SK-N-SH (cell line): ENCODE measurements at regions of chr10 and their contacts with region 1.

Region 1: DNA sequence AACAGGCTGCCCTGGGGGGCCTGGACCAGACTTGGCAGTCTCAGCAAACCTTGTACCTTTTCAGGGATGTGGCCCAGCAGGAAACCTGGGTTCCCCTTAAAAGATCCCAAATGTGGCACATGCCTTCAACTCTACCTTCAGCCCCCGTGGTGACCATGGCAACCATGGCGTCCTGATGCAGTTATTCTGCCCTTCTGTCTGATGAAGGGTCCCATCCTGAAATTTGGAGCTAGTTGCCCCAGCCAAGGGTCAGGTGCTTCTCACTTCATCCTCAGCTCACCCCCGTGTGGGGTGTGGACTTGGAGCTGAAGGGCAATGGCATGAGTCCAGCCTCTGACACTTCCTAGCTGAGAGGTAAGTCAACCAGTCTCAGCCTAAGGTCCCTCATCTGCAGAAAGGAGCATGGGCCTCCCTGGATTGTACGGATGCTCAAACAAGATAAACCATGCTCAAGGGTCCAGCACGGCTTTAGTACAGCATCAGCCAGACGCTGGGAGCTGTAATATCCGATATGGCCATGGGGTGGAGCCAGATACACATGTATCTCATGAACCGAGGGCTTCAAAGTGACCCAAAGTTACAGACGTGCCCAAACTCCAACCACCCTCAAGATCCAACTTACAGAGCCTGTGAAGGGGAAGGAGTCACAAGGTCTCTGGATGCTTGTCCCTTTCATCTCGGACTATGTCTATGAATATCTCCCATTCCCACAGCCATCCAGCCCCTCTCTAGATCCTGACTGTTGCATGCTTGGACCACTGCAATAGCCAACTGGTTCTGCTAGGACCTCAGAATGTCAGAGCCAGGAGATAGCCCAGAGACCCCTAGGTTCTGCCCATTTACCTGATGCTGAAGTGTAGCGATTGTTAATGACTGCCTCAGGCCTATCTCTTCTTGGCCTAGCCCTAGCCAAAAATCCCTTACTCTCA is 142.5 kb downstream of the SH3PXD2A start:
- DNase-seq: peak; percentile 73
- H3K4me3 ChIP-seq: no peak overlapping the region
- H3K27ac ChIP-seq: no peak overlapping the region
- H3K4me1 ChIP-seq: peaks cover 30 to 59% of the 10 kb centered on the region in 2 experiments; a peak in 2 of 4 replicates
- H3K27me3 ChIP-seq: no peaks in the 10 kb centered on the region
- CTCF ChIP-seq: peak; percentile 88
- EP300 ChIP-seq: no peak
- RAD21 ChIP-seq: peak; percentile 98

Region 2: GRCh38 chr10:103592186-103593021 is 120.4 kb before region 1 on chr10:
- CTCF ChIA-PET with region 1: interaction called, 30 read pairs
- POLR2A ChIA-PET with region 1: no interaction called
- DNase-seq: peak; percentile 91
- H3K4me3 ChIP-seq: no peak overlapping the region; a peak in 1 of 4 replicates
- H3K27ac ChIP-seq: peak overlapping the region in 1 of 2 experiments; percentile 7; a peak in 1 of 4 replicates
- H3K4me1 ChIP-seq: peaks cover 0 to 15% of the 10 kb centered on the region in 2 experiments; a peak in 1 of 4 replicates
- H3K27me3 ChIP-seq: no peaks in the 10 kb centered on the region
- CTCF ChIP-seq: peak; percentile 71
- EP300 ChIP-seq: no peak
- RAD21 ChIP-seq: peak; percentile 79

Region 3: GRCh38 chr10:103605359-103606095 is 107.3 kb before region 1 on chr10:
- CTCF ChIA-PET with region 1: interaction called, 16 read pairs
- POLR2A ChIA-PET with region 1: no interaction called
- DNase-seq: peak; percentile 79
- H3K4me3 ChIP-seq: no peak overlapping the region
- H3K27ac ChIP-seq: peak overlapping the region in 1 of 2 experiments; percentile 1; a peak in 1 of 4 replicates
- H3K4me1 ChIP-seq: peaks cover 0 to 25% of the 10 kb centered on the region in 2 experiments; a peak in 2 of 4 replicates
- H3K27me3 ChIP-seq: no peaks in the 10 kb centered on the region
- CTCF ChIP-seq: peak; percentile 72
- EP300 ChIP-seq: no peak
- RAD21 ChIP-seq: peak; percentile 77

Region 4: GRCh38 chr10:103727546-103727963 is 14.7 kb after region 1 on chr10:
- CTCF ChIA-PET with region 1: interaction called, 28 read pairs
- POLR2A ChIA-PET with region 1: interaction called, 3 read pairs
- DNase-seq: peak; percentile 67
- H3K4me3 ChIP-seq: no peak overlapping the region
- H3K27ac ChIP-seq: peak overlapping the region in 1 of 2 experiments; percentile 94; a peak in 2 of 4 replicates
- H3K4me1 ChIP-seq: peaks cover 2 to 62% of the 10 kb centered on the region in 2 experiments; a peak in 3 of 4 replicates
- H3K27me3 ChIP-seq: no peaks in the 10 kb centered on the region
- CTCF ChIP-seq: no peak
- EP300 ChIP-seq: peak in 1 of 2 experiments; percentile 49; a peak in 2 of 4 replicates
- RAD21 ChIP-seq: no peak

Region 5: GRCh38 chr10:103828107-103828506 is 115.3 kb after region 1 on chr10:
- CTCF ChIA-PET with region 1: interaction called, 12 read pairs
- POLR2A ChIA-PET with region 1: no interaction called
- DNase-seq: no peak
- H3K4me3 ChIP-seq: no peak overlapping the region
- H3K27ac ChIP-seq: no peak overlapping the region
- H3K4me1 ChIP-seq: peaks cover 16 to 21% of the 10 kb centered on the region in 2 experiments; a peak in 2 of 4 replicates
- H3K27me3 ChIP-seq: no peaks in the 10 kb centered on the region
- CTCF ChIP-seq: no peak
- EP300 ChIP-seq: no peak
- RAD21 ChIP-seq: no peak

Region 6: DNA sequence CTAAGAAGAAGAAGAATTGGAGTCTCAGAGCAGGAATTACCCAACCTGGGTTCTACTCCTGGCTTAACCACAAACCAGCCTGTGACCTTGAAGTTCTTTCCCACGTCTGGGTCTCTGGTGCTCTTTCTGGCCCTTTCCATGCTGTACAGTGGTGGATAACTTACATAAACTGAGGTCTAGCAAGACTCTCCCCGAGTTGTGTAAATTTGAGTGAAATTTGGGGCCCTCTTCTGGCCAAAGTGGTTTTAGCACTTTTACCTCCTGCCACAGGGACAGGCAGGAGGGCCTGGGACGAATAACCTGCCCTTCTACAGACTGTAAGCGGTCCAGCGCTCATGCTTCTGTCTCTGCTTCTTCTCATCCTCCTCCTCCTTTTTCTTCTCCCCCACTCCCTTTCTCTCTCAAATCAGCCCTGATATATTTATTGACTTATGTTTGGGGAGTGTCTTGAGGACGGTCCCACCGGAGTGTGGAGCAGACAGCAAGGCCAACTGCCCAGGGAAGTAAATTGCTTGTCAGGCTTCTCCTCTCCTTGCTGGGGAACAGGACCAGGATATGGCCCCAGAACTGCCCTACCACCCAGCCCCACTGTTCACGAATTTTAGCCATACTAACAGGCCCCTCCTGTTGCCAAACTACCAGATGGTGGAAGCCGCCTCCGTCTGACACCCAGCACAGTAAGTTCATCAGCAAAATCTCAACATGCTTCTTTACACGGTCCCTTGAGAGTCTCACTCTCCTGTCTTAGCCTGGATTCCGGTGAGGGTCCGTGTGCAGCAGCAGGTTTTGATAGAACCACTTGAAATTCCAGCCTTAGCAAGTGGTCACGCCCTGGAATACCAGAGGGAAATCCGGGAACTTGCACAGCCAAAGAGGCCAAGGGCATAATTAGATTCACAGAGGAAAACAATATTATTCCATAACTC is 146.6 kb after region 1 on chr10:
- CTCF ChIA-PET with region 1: interaction called, 169 read pairs
- POLR2A ChIA-PET with region 1: no interaction called
- DNase-seq: peak; percentile 71
- H3K4me3 ChIP-seq: no peak overlapping the region
- H3K27ac ChIP-seq: no peak overlapping the region; a peak in 1 of 4 replicates
- H3K4me1 ChIP-seq: peaks cover 0 to 19% of the 10 kb centered on the region in 2 experiments; a peak in 2 of 4 replicates
- H3K27me3 ChIP-seq: no peaks in the 10 kb centered on the region
- CTCF ChIP-seq: peak; percentile 78
- EP300 ChIP-seq: no peak
- RAD21 ChIP-seq: peak; percentile 87

Region 7: GRCh38 chr10:103881416-103882284 is 168.8 kb after region 1 on chr10:
- CTCF ChIA-PET with region 1: interaction called, 134 read pairs
- POLR2A ChIA-PET with region 1: interaction called, 4 read pairs
- DNase-seq: no peak
- H3K4me3 ChIP-seq: no peak overlapping the region
- H3K27ac ChIP-seq: peak overlapping the region in 1 of 2 experiments; percentile 43; a peak in 2 of 4 replicates
- H3K4me1 ChIP-seq: peaks cover 0 to 18% of the 10 kb centered on the region in 2 experiments; a peak in 1 of 4 replicates
- H3K27me3 ChIP-seq: no peaks in the 10 kb centered on the region
- CTCF ChIP-seq: no peak
- EP300 ChIP-seq: no peak
- RAD21 ChIP-seq: no peak

Region 8: GRCh38 chr10:103923502-103923901 is 210.7 kb after region 1 on chr10:
- CTCF ChIA-PET with region 1: no interaction called
- POLR2A ChIA-PET with region 1: no interaction called
- DNase-seq: no peak
- H3K4me3 ChIP-seq: no peak overlapping the region
- H3K27ac ChIP-seq: no peak overlapping the region
- H3K4me1 ChIP-seq: peaks cover 3 to 7% of the 10 kb centered on the region in 2 experiments; a peak in 2 of 4 replicates
- H3K27me3 ChIP-seq: no peaks in the 10 kb centered on the region
- CTCF ChIP-seq: no peak
- EP300 ChIP-seq: no peak
- RAD21 ChIP-seq: no peak

Region 9: DNA sequence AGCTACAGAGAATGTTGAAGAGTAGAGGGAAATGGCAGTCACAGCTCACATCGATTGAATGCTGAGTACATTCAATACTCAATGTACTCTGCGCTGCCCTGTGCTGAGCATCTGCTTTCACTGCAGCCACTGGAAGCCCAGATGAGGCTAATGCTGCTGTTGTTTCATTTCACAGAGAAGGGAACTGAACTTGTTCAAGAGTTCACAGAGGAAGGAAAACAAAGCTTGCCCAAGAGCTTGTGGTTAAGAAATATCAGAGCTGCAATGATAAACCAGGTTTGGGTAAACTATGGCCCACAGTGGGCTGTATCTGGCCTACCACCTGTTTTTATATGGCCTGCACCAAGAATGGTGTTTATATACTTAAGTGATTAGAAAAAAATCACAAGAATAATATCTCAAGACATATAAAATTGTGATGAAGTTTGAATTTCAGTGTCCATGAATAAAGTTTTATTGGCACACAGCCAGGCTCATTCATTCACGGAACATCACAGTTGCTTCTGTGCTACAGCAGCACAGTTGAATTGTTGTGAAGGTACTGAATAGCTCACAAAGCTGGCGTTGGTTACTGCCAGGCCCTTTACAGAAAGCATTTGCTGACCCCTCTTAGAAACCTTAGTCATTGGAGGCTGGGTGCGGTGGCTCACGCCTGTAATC is 704.9 kb after region 1 on chr10:
- CTCF ChIA-PET with region 1: no interaction called
- POLR2A ChIA-PET with region 1: no interaction called
- DNase-seq: no peak
- H3K4me3 ChIP-seq: no peak overlapping the region
- H3K27ac ChIP-seq: no peak overlapping the region
- H3K4me1 ChIP-seq: no peaks in the 10 kb centered on the region
- H3K27me3 ChIP-seq: no peaks in the 10 kb centered on the region
- CTCF ChIP-seq: no peak
- EP300 ChIP-seq: no peak
- RAD21 ChIP-seq: no peak